Caco-2 (cell line): ENCODE measurements at regions of chr21 and their contacts with region 1.

Region 1: DNA sequence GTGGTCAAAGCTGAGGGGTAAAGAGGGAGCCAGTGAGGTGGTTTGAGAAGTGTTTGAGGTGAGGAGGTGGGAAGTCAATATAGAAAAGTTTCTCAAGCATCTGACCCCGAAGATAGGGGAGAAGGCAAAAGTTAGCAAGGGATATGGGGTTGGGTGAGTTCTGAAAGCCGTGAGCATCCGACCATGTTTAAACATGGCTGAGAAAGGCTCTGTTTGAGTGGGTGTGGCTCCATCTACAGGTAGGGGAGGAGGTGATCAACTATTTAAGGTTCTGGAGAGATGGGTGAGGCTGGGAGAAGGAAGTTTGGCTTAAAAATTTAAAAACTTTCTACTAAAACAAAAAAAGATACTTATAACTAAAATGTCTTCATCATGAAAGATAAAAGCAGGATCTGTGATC is 273.8 kb downstream of the KCNJ6 start:
- DNase-seq: peak; percentile 51 to 54
- H3K4me3 ChIP-seq: no peak overlapping the region
- H3K4me3 Mint-ChIP-seq: no peak overlapping the region
- H3K27ac Mint-ChIP-seq: no peak overlapping the region
- H3K4me1 ChIP-seq: no peaks in the 10 kb centered on the region
- H3K4me1 Mint-ChIP-seq: peaks cover 10% of the 10 kb centered on the region
- H3K27me3 ChIP-seq: no peaks in the 10 kb centered on the region
- H3K27me3 Mint-ChIP-seq: peaks cover 7% of the 10 kb centered on the region
- CTCF ChIP-seq: peak; percentile 11 to 40

Region 2: DNA sequence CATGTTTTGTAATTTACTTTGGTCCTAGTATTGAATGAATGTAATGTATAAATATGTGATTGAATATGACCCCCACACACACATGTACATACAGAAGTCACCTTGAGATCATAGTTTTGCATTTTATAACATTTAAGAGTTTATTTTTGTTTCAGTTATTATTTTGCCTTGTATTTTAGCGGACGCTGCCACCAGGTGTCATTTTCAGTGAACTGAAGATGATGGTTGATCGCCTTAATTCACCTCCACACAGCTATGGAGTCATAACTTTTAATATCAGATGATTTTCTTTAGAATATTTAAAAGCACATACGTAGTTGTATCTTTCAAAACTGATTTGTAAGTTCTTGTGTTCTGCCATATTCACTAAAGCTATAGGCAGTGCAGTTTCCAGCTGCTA is 145.5 kb before region 1 on chr21:
- CTCF ChIA-PET with region 1: no interaction called
- POLR2A ChIA-PET with region 1: no interaction called
- intact Hi-C with region 1: loop called (anchors 2 kb)
- DNase-seq: no peak
- H3K4me3 ChIP-seq: no peak overlapping the region
- H3K4me3 Mint-ChIP-seq: no peak overlapping the region
- H3K27ac Mint-ChIP-seq: no peak overlapping the region
- H3K4me1 ChIP-seq: no peaks in the 10 kb centered on the region
- H3K4me1 Mint-ChIP-seq: no peaks in the 10 kb centered on the region
- H3K27me3 ChIP-seq: no peaks in the 10 kb centered on the region
- H3K27me3 Mint-ChIP-seq: no peaks in the 10 kb centered on the region
- CTCF ChIP-seq: peak; percentile 3 to 42

Region 3: GRCh38 chr21:37675202-37675801 is 32.8 kb after region 1 on chr21:
- CTCF ChIA-PET with region 1: no interaction called
- POLR2A ChIA-PET with region 1: no interaction called
- intact Hi-C with region 1: no loop called
- DNase-seq: no peak
- H3K4me3 ChIP-seq: no peak overlapping the region
- H3K4me3 Mint-ChIP-seq: no peak overlapping the region
- H3K27ac Mint-ChIP-seq: no peak overlapping the region
- H3K4me1 ChIP-seq: peaks cover 24% of the 10 kb centered on the region
- H3K4me1 Mint-ChIP-seq: peaks cover 30% of the 10 kb centered on the region
- H3K27me3 ChIP-seq: no peaks in the 10 kb centered on the region
- H3K27me3 Mint-ChIP-seq: no peaks in the 10 kb centered on the region
- CTCF ChIP-seq: peak in 1 of 2 experiments; percentile 37